ENCODE measurements at regions of chr16 and their contacts with region 1.

Region 1: DNA sequence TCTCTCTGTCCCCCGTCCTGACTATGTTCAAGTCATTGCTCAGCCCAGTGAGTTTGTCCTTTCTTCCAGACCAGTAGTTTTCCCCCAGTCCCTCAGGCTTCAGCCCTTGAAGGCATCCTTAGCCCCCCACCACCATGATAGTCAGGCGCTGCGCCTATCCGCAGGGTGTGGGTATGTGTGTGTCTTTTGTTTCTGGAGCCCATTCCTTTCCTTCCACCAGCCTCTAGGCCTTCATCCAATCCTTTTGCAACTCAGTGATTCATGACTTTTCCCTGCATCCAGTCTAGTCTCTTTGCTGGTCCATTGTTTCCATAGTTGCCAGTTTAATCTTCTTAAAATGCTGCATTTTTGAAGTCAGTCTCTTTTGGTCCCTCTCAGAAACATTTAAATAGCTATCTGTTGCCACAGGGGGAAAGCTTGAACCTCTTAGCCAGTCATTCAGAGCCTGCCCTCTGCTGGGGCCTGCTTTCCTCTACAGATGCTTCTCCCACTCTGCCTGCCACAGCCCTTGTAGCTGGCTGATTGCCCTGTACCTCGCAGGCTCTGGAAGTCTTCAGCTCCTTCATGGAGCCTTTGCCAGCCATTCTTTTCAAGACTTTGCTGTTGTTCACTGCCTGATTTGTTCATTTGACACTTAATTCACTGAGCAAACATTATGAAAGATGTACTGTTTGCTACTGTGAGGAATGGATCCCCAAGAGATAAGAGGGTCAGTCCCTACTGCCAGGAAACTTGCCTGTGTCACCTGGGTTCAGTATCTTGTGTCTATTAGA is 55.9 kb upstream of the ADCY7 start:
- DNase-seq: peak; percentile 48
- ATAC-seq: peak; percentile 100
- H3K4me3 ChIP-seq: no peak overlapping the region
- H3K27ac ChIP-seq: peak overlapping the region; percentile 61
- H3K4me1 ChIP-seq: peaks cover 18% of the 10 kb centered on the region
- H3K27me3 ChIP-seq: no peaks in the 10 kb centered on the region
- CTCF ChIP-seq: peak; percentile 81 to 92 (median 83)
- EP300 ChIP-seq: no peak
- POLR2A ChIP-seq: no peak
- RAD21 ChIP-seq: peak; percentile 82

Region 2: GRCh38 chr16:50065624-50066481 is 144.6 kb before region 1 on chr16 and contains the start of gene HEATR3:
- CTCF ChIA-PET with region 1: interaction called, 422 read pairs
- POLR2A ChIA-PET with region 1: interaction called, 26 read pairs
- RAD21 ChIA-PET with region 1: interaction called, 309 read pairs
- SMC1A ChIA-PET with region 1: interaction called, 263 read pairs
- in situ Hi-C with region 1: loop called (anchors 5 kb)
- intact Hi-C with region 1: loop called (anchors 1 kb)
- DNase-seq: peak; percentile 82
- ATAC-seq: peak; percentile 93
- H3K4me3 ChIP-seq: peak within 1 kb of the TSS; percentile 99
- H3K27ac ChIP-seq: peak within 1 kb of the TSS; percentile 86
- H3K4me1 ChIP-seq: peaks cover 15% of the 10 kb centered on the region
- H3K27me3 ChIP-seq: no peaks in the 10 kb centered on the region
- CTCF ChIP-seq: no peak
- EP300 ChIP-seq: no peak
- POLR2A ChIP-seq: peak; percentile 89
- RAD21 ChIP-seq: no peak
- polyA plus RNA-seq, gene HEATR3: 1.5 to 5.0 TPM

Region 3: DNA sequence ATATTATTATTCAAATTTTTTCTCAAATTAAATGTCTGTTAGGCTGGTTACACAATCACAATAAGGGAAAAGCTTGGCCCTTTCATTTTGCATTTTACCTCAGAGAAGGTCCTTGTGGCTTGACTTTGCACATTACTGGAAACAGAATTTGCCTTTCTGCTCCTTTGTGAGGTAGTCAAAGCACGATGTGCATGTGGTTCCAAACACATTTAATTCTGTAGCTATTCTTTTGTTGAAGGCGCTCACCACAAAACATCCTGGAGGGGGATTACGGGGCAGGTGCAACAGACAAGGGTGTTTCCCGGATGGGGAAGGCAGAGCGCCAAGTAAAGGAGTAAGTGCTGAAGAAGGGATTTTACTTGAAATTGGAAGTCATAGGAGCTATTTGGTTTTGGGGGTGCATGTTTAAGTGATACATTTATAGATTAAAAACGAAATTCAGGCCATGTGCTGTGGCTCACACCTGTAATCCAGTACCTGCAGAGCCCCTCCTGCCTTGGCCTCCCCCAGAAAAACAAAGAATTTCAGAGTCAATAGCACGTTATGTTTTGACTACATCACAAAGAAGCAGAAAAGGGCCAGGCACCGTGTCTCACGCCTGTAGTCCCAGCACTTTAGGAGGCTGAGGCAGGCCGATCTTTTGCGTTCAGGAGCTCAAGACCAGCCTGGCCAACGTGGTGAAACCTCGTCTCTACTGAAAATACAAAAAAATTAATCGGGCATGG is 88.6 kb before region 1 on chr16:
- CTCF ChIA-PET with region 1: interaction called, 25 read pairs
- POLR2A ChIA-PET with region 1: no interaction called
- RAD21 ChIA-PET with region 1: interaction called, 14 read pairs
- SMC1A ChIA-PET with region 1: interaction called, 29 read pairs
- in situ Hi-C with region 1: no loop called
- intact Hi-C with region 1: no loop called
- DNase-seq: peak; percentile 72
- ATAC-seq: peak; percentile 82
- H3K4me3 ChIP-seq: peak overlapping the region; percentile 16; the same call in 1 of the 2 replicates
- H3K27ac ChIP-seq: peak overlapping the region; percentile 75
- H3K4me1 ChIP-seq: peaks cover 32% of the 10 kb centered on the region
- H3K27me3 ChIP-seq: no peaks in the 10 kb centered on the region
- CTCF ChIP-seq: no peak
- EP300 ChIP-seq: peak; percentile 56 to 85; a peak in 3 of 4 replicates
- POLR2A ChIP-seq: no peak
- RAD21 ChIP-seq: no peak

Region 4: DNA sequence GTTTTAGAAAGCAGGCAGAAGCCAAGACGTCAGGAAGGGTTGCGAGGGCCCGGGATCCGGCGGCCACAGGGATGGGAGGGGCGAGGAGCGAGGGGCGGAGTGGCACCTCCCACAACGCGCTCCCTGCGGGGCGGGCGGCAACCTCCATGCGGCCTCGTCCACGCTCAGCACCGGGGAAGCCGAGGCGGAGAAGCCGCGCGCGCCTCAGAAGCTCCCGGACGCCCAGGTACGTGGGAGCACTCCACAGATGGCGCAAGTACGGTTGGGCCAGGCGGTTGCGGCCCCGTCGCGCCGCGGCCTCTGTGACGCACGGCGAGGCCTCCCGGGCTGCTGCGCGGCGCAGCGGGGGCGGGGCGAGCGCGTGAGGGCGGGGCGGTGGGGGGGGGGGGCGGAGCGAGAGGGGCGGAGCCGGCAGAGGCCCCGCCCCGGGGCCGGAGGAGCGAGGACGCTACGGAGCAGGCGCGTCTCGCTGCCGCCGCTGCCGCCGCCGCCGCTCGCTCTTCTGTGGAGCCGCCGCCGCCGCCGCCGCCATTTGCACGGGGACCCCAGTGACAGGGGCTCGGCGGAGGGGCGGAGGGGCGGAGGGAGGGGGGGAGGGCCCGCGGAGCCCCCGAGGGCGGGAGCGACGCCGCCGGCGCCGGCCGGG is 57.5 kb before region 1 on chr16 and contains the start of gene TENT4B:
- CTCF ChIA-PET with region 1: interaction called, 48 read pairs
- POLR2A ChIA-PET with region 1: interaction called, 3 read pairs
- RAD21 ChIA-PET with region 1: interaction called, 22 read pairs
- SMC1A ChIA-PET with region 1: interaction called, 44 read pairs
- in situ Hi-C with region 1: no loop called
- intact Hi-C with region 1: loop called (anchors 2 kb)
- DNase-seq: peak; percentile 57
- ATAC-seq: peak; percentile 78
- H3K4me3 ChIP-seq: peak within 1 kb of the TSS; percentile 87
- H3K27ac ChIP-seq: peak within 1 kb of the TSS; percentile 96
- H3K4me1 ChIP-seq: peaks cover 6% of the 10 kb centered on the region
- H3K27me3 ChIP-seq: no peaks in the 10 kb centered on the region
- CTCF ChIP-seq: no peak
- EP300 ChIP-seq: no peak
- POLR2A ChIP-seq: peak; percentile 94
- RAD21 ChIP-seq: no peak
- polyA plus RNA-seq, gene TENT4B: 11.7 to 16.7 TPM

Region 5: DNA sequence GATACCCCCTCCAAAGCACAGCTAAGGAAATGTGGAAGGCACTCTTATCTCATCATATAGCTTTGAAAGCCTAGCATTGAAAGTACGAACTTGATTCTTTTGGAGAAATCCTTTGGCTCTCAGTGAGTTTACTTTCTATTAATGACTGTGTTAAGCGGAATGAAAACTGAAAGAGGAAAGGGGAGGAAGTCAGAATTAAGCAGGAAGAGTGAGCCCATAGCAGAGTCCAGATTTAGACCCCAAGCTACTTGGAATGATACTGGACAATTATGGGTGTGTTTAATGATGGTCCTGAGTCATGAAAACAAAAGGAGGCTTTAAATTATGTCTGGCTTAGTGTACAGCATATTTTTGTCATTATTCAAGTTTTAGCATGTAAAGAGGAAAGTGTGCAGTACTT is 15.2 kb before region 1 on chr16:
- CTCF ChIA-PET with region 1: interaction called, 70 read pairs
- POLR2A ChIA-PET with region 1: no interaction called
- RAD21 ChIA-PET with region 1: interaction called, 22 read pairs
- SMC1A ChIA-PET with region 1: interaction called, 52 read pairs
- in situ Hi-C with region 1: no loop called
- intact Hi-C with region 1: no loop called
- DNase-seq: no peak
- ATAC-seq: peak; percentile 12
- H3K4me3 ChIP-seq: peak overlapping the region; percentile 43; the same call in 1 of the 2 replicates
- H3K27ac ChIP-seq: peak overlapping the region; percentile 75
- H3K4me1 ChIP-seq: peaks cover 42% of the 10 kb centered on the region
- H3K27me3 ChIP-seq: no peaks in the 10 kb centered on the region
- CTCF ChIP-seq: no peak
- EP300 ChIP-seq: no peak
- POLR2A ChIP-seq: no peak
- RAD21 ChIP-seq: no peak

Region 6: GRCh38 chr16:50260206-50261159 is 50.0 kb after region 1 on chr16:
- CTCF ChIA-PET with region 1: no interaction called
- POLR2A ChIA-PET with region 1: no interaction called
- RAD21 ChIA-PET with region 1: no interaction called
- SMC1A ChIA-PET with region 1: no interaction called
- in situ Hi-C with region 1: no loop called
- intact Hi-C with region 1: no loop called
- DNase-seq: no peak
- ATAC-seq: no peak
- H3K4me3 ChIP-seq: no peak overlapping the region
- H3K27ac ChIP-seq: no peak overlapping the region
- H3K4me1 ChIP-seq: peaks cover 21% of the 10 kb centered on the region
- H3K27me3 ChIP-seq: no peaks in the 10 kb centered on the region; a peak in 1 of 4 replicates
- CTCF ChIP-seq: no peak
- EP300 ChIP-seq: no peak
- POLR2A ChIP-seq: no peak
- RAD21 ChIP-seq: no peak

Region 7: DNA sequence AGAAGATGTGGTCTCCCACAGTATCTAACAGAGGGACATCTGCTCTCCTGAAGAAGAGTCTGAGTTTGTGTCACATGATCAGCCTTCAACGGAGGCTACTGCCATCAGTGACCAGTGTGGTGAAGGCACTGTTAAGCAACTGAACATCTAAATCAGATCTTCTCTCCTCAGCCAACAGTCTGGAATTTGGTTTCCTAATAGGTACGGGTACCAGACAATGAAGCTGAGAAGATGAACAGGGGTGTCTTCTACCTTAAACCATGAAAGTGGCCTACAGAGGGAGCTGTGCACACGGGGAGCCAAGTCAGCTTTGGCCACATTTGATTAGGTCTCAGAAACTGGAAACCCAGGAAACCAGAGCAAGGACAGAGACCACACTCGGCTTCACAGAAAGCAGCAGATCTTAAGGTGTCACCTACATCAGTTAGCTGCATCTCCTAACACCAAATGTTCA is 116.5 kb after region 1 on chr16:
- CTCF ChIA-PET with region 1: interaction called, 5 read pairs
- POLR2A ChIA-PET with region 1: no interaction called
- RAD21 ChIA-PET with region 1: interaction called, 7 read pairs
- SMC1A ChIA-PET with region 1: interaction called, 7 read pairs
- in situ Hi-C with region 1: no loop called
- intact Hi-C with region 1: loop called (anchors 10 kb)
- DNase-seq: peak; percentile 25
- ATAC-seq: peak; percentile 93
- H3K4me3 ChIP-seq: no peak overlapping the region
- H3K27ac ChIP-seq: no peak overlapping the region; the same call in 1 of the 2 replicates
- H3K4me1 ChIP-seq: peaks cover 3% of the 10 kb centered on the region; the same call in 1 of the 2 replicates
- H3K27me3 ChIP-seq: no peaks in the 10 kb centered on the region
- CTCF ChIP-seq: peak; percentile 45 to 76 (median 55)
- EP300 ChIP-seq: no peak
- POLR2A ChIP-seq: no peak
- RAD21 ChIP-seq: peak; percentile 72

Region 8: DNA sequence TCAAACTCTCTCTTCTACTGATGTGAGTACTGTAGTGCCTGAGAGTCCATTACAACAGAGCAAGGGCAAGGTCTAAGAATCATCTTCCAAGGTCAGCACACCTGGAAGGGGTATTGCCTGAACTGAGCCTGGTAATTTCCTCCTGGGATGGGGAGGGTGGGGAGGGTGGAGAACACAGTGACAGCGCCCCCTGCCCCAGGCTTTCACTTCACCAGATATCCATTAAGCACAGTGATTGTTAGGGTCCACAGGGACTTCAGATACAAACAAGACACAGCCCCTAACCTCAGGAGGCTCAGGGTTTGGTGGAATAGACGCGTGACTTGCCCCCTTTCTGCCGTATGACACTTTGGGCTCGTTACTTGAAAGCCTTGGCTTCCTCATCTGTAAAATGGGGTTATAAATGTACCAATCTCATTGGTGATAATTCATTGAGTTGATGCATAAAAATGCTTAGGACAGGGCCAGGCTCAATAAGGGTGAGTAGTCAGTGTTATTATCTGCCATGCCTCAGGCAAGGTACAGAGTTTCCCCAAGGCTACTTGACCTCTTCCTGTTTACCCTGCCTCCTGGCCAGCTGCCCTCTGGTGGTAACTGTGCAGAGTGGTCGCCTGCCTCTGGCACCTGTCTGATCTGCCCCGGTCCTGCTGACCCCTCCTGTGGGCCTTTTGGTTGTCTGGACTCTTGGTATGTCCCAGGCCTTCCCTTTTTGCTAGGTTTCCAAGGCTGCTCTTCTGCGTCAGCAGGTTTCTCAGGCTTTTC is 171.4 kb after region 1 on chr16:
- CTCF ChIA-PET with region 1: no interaction called
- POLR2A ChIA-PET with region 1: no interaction called
- RAD21 ChIA-PET with region 1: no interaction called
- SMC1A ChIA-PET with region 1: no interaction called
- in situ Hi-C with region 1: no loop called
- intact Hi-C with region 1: no loop called
- DNase-seq: no peak
- ATAC-seq: peak; percentile 81
- H3K4me3 ChIP-seq: no peak overlapping the region
- H3K27ac ChIP-seq: no peak overlapping the region
- H3K4me1 ChIP-seq: no peaks in the 10 kb centered on the region
- H3K27me3 ChIP-seq: no peaks in the 10 kb centered on the region; a peak in 1 of 4 replicates
- CTCF ChIP-seq: peak; percentile 20 to 27 (median 23); a peak in 2 of 6 replicates
- EP300 ChIP-seq: no peak
- POLR2A ChIP-seq: no peak
- RAD21 ChIP-seq: no peak

Region 9: DNA sequence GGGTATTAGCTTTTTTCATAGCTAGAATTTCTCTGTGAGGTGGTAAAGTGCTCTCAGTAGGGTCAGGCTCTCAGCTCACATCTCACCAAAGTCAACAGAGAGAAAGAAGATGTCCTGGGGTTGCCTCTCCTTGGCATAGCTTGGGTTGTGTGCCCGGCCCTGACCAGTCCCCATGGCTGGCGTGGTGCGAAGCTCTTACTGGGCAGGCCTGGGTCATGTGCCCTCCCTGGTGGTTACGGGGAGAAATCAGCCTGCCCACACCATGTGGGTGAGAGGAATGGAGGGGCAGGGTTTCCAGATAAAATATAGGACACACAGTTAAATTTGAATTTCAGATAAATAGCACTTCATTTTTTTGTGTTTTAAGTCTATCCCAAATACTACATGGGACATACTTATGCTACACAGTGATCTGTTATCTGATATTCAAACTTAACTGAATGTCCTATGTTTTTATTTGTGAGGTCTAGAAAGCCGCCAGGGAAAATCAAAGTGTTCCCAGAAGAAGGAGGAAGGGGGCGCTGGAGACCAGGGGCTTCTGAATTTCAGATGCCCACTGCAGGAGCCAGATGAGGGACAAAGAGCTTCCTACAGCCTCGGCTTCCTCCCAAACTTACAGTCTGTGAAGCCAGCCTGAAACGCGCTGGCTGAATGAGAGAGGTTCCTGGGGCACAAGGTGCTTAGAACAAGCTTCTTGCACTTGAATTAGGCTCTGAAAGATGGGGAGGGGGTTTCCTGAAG is 383.1 kb after region 1 on chr16:
- CTCF ChIA-PET with region 1: no interaction called
- POLR2A ChIA-PET with region 1: no interaction called
- RAD21 ChIA-PET with region 1: no interaction called
- SMC1A ChIA-PET with region 1: no interaction called
- in situ Hi-C with region 1: no loop called
- intact Hi-C with region 1: no loop called
- DNase-seq: no peak
- ATAC-seq: no peak
- H3K4me3 ChIP-seq: no peak overlapping the region
- H3K27ac ChIP-seq: no peak overlapping the region
- H3K4me1 ChIP-seq: peaks cover 9% of the 10 kb centered on the region
- H3K27me3 ChIP-seq: no peaks in the 10 kb centered on the region
- CTCF ChIP-seq: peak in 1 of 3 experiments; percentile 17; a peak in 1 of 6 replicates
- EP300 ChIP-seq: no peak
- POLR2A ChIP-seq: no peak
- RAD21 ChIP-seq: peak; percentile 31; the same call in 1 of the 2 replicates

Measured in GM12878 (cell line).